AG04450 (cell line): ENCODE measurements at regions of chr4 and their contacts with region 1.

Region 1: DNA sequence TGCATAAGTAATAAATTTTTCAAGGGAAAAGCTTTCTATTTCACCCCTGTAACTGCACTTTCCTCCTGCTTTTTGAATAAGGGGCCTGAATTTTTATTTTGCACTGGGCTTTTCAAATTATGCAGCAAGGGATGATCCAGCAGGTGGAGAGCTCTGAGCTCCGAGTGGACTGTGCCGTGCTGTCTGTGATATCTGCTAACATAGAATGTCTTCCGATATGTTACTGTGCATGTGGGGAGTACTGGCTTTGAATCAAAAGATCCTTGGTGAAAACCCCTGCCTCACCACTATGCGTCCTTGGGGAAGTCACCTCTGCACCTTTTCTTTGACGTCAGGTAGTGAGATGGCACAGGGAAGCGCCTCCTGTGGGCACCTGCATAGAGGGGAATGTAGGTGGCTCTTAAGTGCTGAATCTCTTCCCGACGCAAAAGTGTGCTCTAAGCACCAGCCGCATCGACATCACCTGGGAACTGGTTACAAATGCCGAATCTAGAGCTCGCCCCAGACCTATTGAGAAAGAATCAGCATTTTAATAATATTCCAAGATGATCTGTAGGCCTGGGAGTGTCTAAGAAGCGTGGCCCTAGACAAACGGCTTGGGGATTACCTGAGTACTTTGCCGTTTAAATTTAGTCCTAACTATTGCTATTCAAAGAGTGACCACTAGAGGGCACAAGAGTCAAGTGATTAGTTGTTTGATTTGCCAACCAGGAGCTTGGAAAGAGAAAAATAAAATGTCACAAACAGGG is 19.2 kb upstream of the WFS1 start:
- DNase-seq: peak; percentile 24
- H3K4me3 ChIP-seq: no peak overlapping the region
- H3K27ac ChIP-seq: no peak overlapping the region
- H3K27me3 ChIP-seq: peaks cover 31% of the 10 kb centered on the region
- CTCF ChIP-seq: peak; percentile 81

Region 2: DNA sequence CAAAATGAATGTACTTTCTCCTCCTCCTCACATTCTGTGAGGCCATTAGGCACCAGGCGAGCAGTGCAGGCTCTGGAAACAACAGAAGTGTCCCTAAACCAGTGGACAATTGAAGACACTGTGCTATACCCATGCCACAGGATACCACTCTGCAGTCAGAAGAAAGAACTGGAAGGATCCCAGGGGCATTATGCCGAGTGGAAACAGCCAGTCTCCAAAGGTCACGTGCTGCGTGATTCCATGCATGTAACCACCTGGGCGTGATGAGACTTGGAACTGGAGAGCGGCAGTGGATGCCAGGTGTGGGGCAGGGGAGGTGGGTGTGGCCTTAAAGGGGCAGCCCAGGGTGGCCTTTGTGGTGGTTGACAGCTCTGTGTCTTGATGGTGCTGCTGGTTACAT is 681.5 kb before region 1 on chr4:
- CTCF ChIA-PET with region 1: no interaction called
- POLR2A ChIA-PET with region 1: no interaction called
- DNase-seq: no peak
- H3K4me3 ChIP-seq: no peak overlapping the region
- H3K27ac ChIP-seq: no peak overlapping the region
- H3K27me3 ChIP-seq: no peaks in the 10 kb centered on the region
- CTCF ChIP-seq: no peak

Region 3: DNA sequence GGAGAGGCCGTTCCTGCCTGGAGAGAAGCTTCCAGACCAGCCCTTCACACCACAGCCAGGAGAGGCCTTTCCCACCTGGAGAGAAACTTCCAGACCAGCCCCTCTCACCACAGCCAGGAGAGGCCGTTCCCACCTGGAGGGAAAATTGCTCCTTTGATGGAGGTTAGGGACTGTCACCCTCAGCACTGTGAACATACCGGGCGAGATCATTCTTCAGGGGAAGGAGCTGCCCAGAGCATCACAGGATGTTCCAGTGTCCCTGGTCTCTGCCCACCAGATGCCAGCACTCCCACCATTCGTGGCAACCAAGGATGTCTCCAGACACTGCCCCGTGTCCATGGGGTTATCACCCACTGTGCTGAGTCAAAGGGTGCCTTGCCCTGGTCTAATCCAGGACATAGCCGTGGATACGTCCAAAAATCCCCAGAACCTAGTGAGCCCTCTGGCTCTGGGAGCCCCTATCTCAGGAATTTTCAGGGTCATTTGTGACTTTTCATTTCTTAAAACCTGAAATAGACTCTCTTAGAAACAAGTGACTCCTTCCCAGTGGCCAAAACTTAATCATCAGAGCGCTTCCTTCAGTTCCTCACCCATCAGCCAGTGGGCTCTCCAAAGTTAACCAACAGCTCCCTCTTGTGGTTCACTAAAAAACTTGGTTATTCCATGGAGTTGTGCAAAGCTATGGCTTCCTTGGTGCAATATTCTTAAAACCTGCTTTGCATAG is 437.7 kb before region 1 on chr4:
- CTCF ChIA-PET with region 1: no interaction called
- POLR2A ChIA-PET with region 1: no interaction called
- DNase-seq: peak; percentile 42
- H3K4me3 ChIP-seq: no peak overlapping the region
- H3K27ac ChIP-seq: no peak overlapping the region
- H3K27me3 ChIP-seq: no peaks in the 10 kb centered on the region
- CTCF ChIP-seq: peak; percentile 85

Region 4: DNA sequence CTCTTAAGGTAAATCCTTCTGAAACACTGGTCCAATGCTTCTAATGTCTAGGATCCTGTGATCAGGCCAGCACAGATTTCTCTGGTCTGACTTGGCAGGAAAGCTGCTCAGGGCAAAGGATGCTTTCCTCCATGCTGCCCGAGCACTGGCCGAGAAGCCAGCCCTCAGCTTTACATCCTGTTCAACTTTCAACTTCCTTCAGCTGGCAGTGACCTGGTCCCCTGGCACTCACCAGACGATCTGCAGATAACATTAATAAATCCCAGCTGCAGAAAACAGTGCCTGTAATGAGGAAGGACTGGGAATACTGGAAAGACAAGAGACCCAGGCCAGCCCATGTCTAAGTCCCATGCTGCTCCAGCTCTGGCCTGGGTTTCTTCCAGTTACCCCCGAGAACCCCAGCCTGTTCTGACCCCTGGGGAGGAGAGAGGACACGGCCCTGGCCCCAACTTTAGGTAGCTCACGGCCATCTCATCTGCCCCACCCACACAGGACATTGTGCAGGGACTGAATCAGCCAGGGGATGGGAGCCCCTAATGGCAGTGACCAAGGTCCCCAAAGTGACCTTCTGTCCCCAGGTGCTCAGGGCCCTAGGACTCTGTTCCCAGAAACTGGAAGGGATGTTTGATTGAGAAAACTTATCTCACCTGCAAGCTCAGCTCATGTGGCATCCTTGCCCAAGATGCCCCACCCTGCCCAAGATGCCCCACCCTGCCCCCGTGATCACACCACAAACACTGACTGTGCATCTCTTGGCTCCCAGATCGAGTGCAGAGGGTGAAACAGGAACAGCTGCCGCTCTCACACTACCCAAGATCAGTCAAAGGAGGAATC is 78.1 kb before region 1 on chr4:
- CTCF ChIA-PET with region 1: no interaction called
- POLR2A ChIA-PET with region 1: no interaction called
- DNase-seq: no peak
- H3K4me3 ChIP-seq: no peak overlapping the region
- H3K27ac ChIP-seq: no peak overlapping the region
- H3K27me3 ChIP-seq: no peaks in the 10 kb centered on the region
- CTCF ChIP-seq: no peak

Region 5: GRCh38 chr4:6264225-6264540 is 13.8 kb after region 1 on chr4:
- CTCF ChIA-PET with region 1: interaction called, 97 read pairs
- POLR2A ChIA-PET with region 1: no interaction called
- DNase-seq: no peak
- H3K4me3 ChIP-seq: no peak overlapping the region
- H3K27ac ChIP-seq: no peak overlapping the region
- H3K27me3 ChIP-seq: peaks cover 11% of the 10 kb centered on the region
- CTCF ChIP-seq: peak; percentile 88

Region 6: GRCh38 chr4:6282314-6282771 is 31.9 kb after region 1 on chr4:
- CTCF ChIA-PET with region 1: interaction called, 11 read pairs
- POLR2A ChIA-PET with region 1: no interaction called
- DNase-seq: no peak
- H3K4me3 ChIP-seq: no peak overlapping the region
- H3K27ac ChIP-seq: peak overlapping the region; percentile 61
- H3K27me3 ChIP-seq: no peaks in the 10 kb centered on the region
- CTCF ChIP-seq: no peak

Region 7: DNA sequence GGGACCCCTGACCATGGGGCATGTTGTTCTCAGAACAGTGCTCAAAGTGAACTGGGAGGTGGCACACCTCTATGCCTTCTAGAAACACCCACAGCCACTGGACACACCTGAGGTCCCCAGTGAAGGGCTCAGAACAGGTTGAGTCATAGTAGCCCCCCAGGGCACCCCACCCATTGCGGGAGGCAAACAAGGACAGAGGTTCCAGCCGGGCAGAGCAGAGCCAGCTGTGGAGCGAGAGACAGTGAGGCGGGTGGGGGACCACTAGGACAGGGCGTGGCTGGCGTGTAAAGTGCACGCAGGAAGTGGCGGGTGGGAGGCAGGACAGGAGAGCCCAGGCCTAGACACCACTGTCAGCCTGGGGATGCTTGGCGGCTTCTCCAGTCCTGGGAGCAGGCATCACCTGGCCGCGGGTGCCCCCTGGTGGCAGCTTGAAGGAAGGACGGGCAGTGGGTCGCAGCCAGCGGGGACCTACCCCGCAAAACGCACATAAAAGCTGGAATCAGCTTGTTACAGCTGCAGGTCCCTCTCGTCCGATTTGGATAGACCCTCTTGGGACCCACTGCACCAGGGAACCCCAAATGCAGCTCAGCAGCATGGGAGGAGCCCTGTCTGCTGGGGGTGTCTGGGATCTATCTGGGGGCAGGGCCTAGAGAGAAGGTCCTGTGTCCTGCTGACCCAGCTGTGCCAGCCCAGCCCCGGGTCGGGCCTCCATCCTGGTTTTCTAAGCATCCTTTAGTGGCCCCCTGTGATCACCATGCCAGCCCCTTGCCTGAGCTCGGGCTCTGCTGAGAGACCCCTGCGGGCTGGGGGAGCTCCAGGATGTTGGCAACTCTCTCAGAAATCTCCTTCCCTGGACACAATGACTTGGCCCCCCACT is 76.9 kb after region 1 on chr4:
- CTCF ChIA-PET with region 1: interaction called, 563 read pairs
- POLR2A ChIA-PET with region 1: no interaction called
- DNase-seq: peak; percentile 27
- H3K4me3 ChIP-seq: no peak overlapping the region
- H3K27ac ChIP-seq: no peak overlapping the region
- H3K27me3 ChIP-seq: peaks cover 20% of the 10 kb centered on the region
- CTCF ChIP-seq: peak; percentile 91

Region 8: DNA sequence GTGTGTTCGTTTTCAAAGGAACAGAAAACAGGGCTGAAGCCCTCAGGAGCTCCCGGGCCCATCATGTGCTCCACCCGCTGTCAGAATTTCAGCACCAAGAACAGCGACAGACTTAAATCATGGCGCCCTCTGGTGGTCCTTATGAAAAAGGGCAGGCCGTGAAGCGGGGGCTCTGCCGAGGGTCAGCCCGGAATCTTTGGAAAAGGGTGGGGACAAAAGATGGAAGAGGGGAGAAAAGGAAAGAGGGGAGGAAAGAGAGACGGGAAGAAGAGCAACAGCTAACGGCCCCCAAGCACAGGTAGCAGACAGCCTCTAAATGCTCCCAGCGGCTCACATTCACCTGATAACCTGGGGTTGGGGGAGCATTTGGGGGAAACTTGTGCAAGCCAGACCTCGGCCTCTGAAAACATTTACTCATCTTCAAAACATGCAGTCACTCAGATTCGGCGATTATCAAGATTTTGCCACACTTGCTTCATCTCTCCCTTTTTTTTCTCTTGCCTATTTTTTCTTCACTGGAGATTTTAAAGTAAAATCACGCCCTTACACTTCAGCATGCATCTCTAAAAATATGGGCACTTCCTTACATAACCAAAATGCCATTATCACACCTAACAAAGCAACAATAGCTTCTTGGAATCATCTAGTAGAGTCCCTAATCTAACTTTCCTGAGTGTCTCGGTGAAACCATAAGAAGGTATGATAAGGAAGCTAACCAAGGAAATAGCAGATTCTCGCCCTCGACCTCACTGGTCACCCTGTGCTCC is 296.5 kb after region 1 on chr4:
- CTCF ChIA-PET with region 1: interaction called, 49 read pairs
- POLR2A ChIA-PET with region 1: no interaction called
- DNase-seq: peak; percentile 33
- H3K4me3 ChIP-seq: no peak overlapping the region
- H3K27ac ChIP-seq: no peak overlapping the region
- H3K27me3 ChIP-seq: peaks cover 3% of the 10 kb centered on the region
- CTCF ChIP-seq: peak; percentile 94